Head of caudate nucleus (tissue), 42 donors: ENCODE measurements at regions of chr6 and their contacts with region 1.

Region 1: GRCh38 chr6:53651764-53652401 is 13.7 kb downstream of the KLHL31 start:
- DNase-seq: peak; percentile 57 to 93 (median 83)

Region 2: GRCh38 chr6:53359072-53359842 is 292.6 kb before region 1 on chr6:
- intact Hi-C with region 1: loop called (anchors 5 kb)
- DNase-seq: peak; percentile 93 to 99 (median 98)

Region 3: GRCh38 chr6:53492860-53493634 is 158.8 kb before region 1 on chr6:
- intact Hi-C with region 1: loop called (anchors 5 kb)
- DNase-seq: peak in 5 of 42 donors; percentile 14 to 67 (median 41)

Region 4: DNA sequence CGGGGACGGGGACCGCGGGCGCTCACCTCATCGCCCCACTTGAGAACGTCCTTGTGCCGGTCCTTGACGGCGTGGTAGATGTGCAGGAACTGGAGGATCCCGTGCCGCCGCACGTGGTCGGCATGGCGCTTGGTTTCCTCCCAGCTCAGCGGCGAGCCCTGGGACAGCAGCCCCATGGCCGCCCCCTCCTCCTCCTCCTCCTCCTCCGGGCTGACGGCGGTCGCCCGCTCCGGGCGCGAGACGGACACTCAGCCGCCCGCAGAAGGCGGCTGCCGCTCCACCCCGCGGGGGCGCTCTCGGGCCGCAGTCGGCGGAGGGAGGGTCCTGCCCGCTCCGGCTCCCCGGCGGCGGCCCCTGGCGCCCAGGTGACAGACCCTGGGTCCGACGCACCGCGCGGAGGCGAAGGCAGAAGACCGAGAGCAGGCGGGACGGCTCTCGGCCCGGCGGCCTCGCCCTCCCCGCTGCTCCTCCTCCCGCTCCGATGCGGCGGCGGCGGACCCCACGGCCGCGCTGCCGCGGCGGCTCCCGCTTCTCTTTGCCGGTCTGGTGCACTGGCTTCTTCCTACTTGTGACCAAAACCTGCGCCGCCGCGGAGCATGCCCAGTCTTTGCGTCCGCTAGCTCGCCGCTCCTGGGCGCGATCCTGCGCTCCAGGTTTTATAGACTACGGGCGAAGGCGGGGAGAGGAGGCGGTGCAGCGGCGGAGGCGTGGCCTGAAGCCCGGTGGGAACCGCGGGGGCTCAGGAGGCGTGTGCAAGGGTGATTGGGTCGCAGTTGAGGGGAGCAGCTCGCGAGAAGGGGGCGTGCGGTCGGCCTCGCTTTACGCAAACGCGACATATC is 107.2 kb before region 1 on chr6 and contains the start of gene GCLC:
- intact Hi-C with region 1: loop called (anchors 5 kb)
- DNase-seq: peak; percentile 79 to 97 (median 93)

Region 5: DNA sequence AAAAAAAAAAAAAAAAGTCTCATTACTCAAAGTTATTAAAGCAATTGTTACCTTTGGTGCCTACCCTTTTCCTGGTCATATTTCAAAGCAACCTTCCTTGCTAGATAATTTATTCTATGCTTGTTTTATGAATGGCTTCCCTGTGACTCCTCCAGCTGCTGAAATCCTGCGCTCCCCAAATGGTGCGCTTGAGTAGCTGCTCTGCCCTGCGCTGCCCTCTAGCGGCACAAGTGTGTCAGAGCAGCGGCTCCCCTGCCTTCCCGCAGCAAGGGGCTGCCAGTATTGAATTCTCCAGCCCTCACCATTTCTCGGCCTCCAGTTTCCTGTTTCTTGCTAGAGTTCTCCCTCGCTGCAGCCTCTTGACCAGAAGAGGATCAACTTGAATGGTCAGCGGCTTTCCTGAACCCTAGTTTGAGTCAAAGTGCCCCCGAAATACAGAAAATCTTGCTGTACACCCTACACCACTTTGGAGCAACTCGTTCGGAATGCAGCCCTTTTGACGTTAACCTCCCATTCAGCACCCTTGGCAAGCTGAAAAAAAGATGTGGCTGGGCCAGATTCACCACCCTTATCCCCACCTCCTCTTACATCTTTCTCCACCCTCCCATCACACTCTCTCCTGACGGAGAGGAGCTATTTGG is 74.0 kb after region 1 on chr6:
- intact Hi-C with region 1: loop called (anchors 5 kb)
- DNase-seq: peak; percentile 65 to 93 (median 86)